Activated B cell treated with CpG ODN at 0.5 μM for 24 hours (primary cell): ENCODE measurements at regions of chr16 and their contacts with region 1.

Region 1: DNA sequence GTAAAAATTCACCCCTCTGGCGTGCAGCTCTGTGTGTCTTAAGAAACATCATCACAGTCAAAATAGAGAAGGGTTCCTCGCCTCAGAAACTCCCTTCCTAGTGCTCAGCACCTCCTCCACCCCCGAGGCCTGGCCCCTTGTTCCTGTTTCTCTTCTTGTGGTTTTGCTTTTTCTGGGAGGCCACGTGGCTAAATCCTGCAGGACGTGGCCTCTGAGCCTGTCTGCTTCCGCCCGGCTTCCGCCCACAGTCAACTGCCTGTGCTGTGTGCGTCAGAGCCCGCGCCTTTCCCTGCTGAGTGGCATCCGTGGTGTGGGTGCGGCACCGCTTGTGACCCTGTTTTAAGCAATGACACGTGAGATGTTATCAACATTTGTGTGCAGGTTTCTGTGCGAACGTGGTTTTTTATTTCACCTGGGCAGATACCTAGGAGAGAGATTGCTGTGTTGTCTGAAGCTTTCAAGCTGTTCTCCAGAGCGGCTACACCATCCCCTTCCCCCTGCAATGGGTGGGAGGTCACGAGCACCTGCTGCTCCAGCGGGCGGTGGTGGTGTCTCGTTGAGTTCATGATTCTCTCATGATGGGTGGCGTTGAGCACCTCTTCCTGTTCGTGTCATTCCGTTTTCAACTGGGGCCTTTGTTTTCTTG is 21.7 kb downstream of the ACSF3 start:
- DNase-seq: peak; percentile 64
- ATAC-seq: peak; percentile 84
- H3K4me3 Mint-ChIP-seq: peak overlapping the region; percentile 78
- H3K27ac Mint-ChIP-seq: peak overlapping the region; percentile 95
- H3K4me1 Mint-ChIP-seq: peaks cover 9% of the 10 kb centered on the region
- H3K27me3 Mint-ChIP-seq: no peaks in the 10 kb centered on the region
- CTCF ChIP-seq: no peak

Region 2: GRCh38 chr16:88886845-88887521 is 228.4 kb before region 1 on chr16:
- CTCF ChIA-PET with region 1: no interaction called
- POLR2A ChIA-PET with region 1: no interaction called
- intact Hi-C with region 1: no loop called
- DNase-seq: no peak
- ATAC-seq: no peak
- H3K4me3 Mint-ChIP-seq: no peak overlapping the region
- H3K27ac Mint-ChIP-seq: no peak overlapping the region
- H3K4me1 Mint-ChIP-seq: peaks cover 10% of the 10 kb centered on the region
- H3K27me3 Mint-ChIP-seq: no peaks in the 10 kb centered on the region
- CTCF ChIP-seq: no peak

Region 3: DNA sequence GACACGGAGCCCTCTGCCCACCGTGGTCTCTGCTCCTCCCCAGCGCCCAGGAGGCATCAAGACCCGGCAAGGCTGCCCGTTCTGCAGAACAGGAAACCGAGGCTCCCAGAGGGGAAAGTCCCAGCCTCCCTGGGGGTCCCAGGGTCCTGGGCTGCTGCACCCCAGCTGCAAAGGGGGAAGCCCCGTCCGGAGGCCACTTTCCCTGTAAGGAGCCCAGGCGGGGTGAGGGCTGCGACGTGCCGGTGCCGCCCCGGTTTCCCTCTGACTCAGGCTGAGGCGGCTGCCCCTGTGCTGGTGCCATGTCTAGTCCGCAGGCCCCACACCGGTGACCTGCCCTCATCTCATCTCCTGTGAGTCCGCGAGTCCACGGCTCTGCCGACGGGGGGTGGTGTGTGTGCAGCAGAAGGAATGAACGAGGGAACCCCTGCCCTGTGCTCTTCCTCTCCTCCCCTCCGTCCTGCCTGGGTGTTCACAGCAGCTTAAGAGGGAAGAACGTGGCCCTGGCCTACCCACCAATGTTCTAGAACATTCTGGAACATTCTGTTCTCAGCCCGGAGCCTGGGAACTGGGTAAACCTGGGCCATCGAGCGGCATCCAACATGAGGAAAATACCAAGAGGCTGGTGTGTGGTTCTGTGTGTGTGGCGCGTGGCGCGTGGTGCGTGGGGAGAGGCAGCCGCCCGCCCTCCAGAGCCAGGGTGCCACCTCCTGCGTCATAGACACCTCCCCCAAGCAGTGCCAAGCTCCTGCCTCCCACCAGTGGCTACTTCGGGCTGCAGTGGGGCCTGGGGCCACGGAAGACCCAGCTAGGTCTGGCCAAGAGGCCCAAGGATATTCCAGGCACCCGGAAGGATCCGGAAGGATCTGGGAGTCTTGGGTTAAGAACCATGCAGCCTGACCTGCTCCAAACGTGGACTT is 131.3 kb before region 1 on chr16:
- CTCF ChIA-PET with region 1: no interaction called
- POLR2A ChIA-PET with region 1: no interaction called
- intact Hi-C with region 1: loop called (anchors 1 kb)
- DNase-seq: peak; percentile 82
- ATAC-seq: peak; percentile 82
- H3K4me3 Mint-ChIP-seq: peak overlapping the region; percentile 76
- H3K27ac Mint-ChIP-seq: peak overlapping the region; percentile 82
- H3K4me1 Mint-ChIP-seq: peaks cover 80% of the 10 kb centered on the region
- H3K27me3 Mint-ChIP-seq: no peaks in the 10 kb centered on the region
- CTCF ChIP-seq: no peak

Region 4: GRCh38 chr16:89060207-89060794 is 55.0 kb before region 1 on chr16:
- CTCF ChIA-PET with region 1: no interaction called
- POLR2A ChIA-PET with region 1: interaction called, 3 read pairs
- intact Hi-C with region 1: loop called (anchors 2 kb)
- DNase-seq: peak; percentile 55
- ATAC-seq: peak; percentile 81
- H3K4me3 Mint-ChIP-seq: peak overlapping the region; percentile 68
- H3K27ac Mint-ChIP-seq: peak overlapping the region; percentile 89
- H3K4me1 Mint-ChIP-seq: peaks cover 50% of the 10 kb centered on the region
- H3K27me3 Mint-ChIP-seq: no peaks in the 10 kb centered on the region
- CTCF ChIP-seq: no peak

Region 5: GRCh38 chr16:89093602-89094251 is 21.6 kb before region 1 on chr16 and contains the start of gene ACSF3:
- CTCF ChIA-PET with region 1: interaction called, 3 read pairs
- POLR2A ChIA-PET with region 1: interaction called, 28 read pairs
- intact Hi-C with region 1: loop called (anchors 1 kb)
- DNase-seq: peak; percentile 77
- ATAC-seq: peak; percentile 72
- H3K4me3 Mint-ChIP-seq: peak within 1 kb of the TSS; percentile 97
- H3K27ac Mint-ChIP-seq: peak within 1 kb of the TSS; percentile 93
- H3K4me1 Mint-ChIP-seq: peaks cover 46% of the 10 kb centered on the region
- H3K27me3 Mint-ChIP-seq: peaks cover 16% of the 10 kb centered on the region
- CTCF ChIP-seq: no peak
- total RNA-seq, gene ACSF3: 59.6 and 78.0 TPM in 2 replicates

Region 6: GRCh38 chr16:89099905-89100304 is 15.4 kb before region 1 on chr16:
- CTCF ChIA-PET with region 1: interaction called, 3 read pairs
- POLR2A ChIA-PET with region 1: interaction called, 28 read pairs
- intact Hi-C with region 1: loop called (anchors 1 kb)
- DNase-seq: no peak
- ATAC-seq: no peak
- H3K4me3 Mint-ChIP-seq: no peak overlapping the region
- H3K27ac Mint-ChIP-seq: no peak overlapping the region
- H3K4me1 Mint-ChIP-seq: peaks cover 54% of the 10 kb centered on the region
- H3K27me3 Mint-ChIP-seq: no peaks in the 10 kb centered on the region
- CTCF ChIP-seq: no peak